AG04450 (cell line): ENCODE measurements at regions of chrX and their contacts with region 1.

Region 1: DNA sequence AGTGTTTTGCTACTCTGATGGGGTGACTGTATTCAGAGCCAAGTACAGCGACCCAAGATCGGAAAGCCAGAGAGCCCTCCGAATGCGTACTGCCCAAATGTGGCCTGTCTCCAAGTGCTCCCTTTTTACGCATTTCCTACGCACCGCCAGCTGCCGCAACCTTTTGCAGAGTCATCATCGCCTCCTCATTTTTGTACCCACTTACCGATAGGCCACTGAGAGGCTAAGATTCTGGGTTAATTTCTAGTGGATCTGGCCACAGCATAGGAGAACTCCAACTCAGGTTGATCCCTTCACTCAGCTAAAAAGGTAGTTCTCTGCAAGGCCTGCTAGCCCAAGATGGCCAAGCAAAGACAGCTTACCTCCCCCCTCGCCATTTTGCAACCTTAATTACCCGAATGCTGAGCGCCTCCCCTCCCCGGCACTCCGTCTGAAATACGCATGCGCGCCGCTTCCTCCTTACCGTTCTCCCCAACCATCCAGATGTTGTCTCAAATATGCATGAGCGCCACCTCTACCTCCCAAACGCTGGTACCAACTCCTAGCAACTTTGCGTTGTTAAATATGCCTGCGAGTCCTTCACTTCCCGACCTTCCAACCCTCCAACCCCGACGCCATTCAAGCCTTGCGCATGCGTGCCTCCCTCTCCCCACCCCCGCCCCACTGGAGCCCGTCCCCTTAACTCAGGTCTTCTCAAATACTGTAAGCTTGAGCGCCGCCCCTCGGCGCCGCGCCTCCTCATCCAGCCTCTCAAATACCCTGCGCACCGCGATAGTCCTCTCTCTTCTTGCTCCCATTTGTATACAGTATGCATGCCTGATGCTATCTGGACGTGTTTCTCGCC is 11.8 kb upstream of the ZCCHC13 start:
- DNase-seq: peak; percentile 75
- H3K4me3 ChIP-seq: peak overlapping the region; percentile 81
- H3K27ac ChIP-seq: peak overlapping the region; percentile 94
- H3K27me3 ChIP-seq: no peaks in the 10 kb centered on the region
- CTCF ChIP-seq: peak; percentile 32

Region 2: GRCh38 chrX:74195605-74196004 is 96.6 kb before region 1 on chrX:
- CTCF ChIA-PET with region 1: no interaction called
- POLR2A ChIA-PET with region 1: no interaction called
- DNase-seq: no peak
- H3K4me3 ChIP-seq: no peak overlapping the region
- H3K27ac ChIP-seq: no peak overlapping the region
- H3K27me3 ChIP-seq: no peaks in the 10 kb centered on the region
- CTCF ChIP-seq: no peak

Region 3: DNA sequence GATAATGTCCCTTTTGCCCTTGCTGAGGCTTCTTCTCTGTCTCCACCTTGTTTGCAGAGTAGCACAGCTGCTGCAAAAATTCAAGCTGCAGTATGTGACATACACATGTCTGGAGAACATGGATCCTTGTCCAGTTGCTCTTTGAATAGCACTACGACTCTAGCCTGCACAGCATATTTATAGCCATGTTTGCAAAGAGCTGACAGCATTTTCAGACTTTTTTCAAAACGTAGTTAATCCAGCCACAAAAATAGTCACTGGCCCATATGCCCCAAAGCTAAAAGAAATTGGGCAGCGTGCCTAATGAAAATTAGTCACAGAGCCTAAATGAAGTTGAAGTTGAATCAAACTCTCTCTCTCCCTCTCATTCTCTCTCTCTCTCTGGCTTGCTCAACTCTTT is 146.6 kb after region 1 on chrX:
- CTCF ChIA-PET with region 1: no interaction called
- POLR2A ChIA-PET with region 1: interaction called, 10 read pairs
- DNase-seq: no peak
- H3K4me3 ChIP-seq: no peak overlapping the region
- H3K27ac ChIP-seq: no peak overlapping the region
- H3K27me3 ChIP-seq: no peaks in the 10 kb centered on the region
- CTCF ChIP-seq: no peak